Endothelial cell of umbilical vein (primary cell): ENCODE measurements at regions of chr2 and their contacts with region 1.

Region 1: DNA sequence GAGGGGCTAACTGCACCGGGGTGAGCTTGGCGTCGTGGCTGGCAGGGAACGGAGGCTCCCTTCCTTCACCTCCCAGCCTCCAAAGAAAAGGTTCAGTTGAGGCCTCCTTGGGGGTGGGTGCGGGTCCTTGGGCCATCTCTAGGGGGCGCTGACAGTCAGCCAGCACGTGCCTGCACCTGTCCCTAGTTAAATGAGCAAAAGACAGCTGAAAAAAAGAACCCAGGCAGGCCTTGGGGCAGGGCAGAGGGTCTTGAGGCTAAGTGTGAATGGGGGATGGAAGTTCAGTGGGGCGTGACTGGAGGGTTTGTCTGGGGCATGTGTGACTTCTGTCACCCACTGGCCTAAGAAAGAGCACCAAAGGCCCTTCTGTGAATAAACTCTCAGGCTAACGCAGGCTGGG is 56.4 kb downstream of the ZFP36L2 start:
- DNase-seq: peak; percentile 59
- H3K4me3 ChIP-seq: no peak overlapping the region
- H3K27ac ChIP-seq: peak overlapping the region; percentile 88
- H3K4me1 ChIP-seq: peaks cover 47% of the 10 kb centered on the region
- H3K27me3 ChIP-seq: no peaks in the 10 kb centered on the region
- CTCF ChIP-seq: peak; percentile 76 to 78
- POLR2A ChIP-seq: no peak

Region 2: GRCh38 chr2:42859006-42859552 is 310.9 kb before region 1 on chr2:
- CTCF ChIA-PET with region 1: no interaction called
- POLR2A ChIA-PET with region 1: no interaction called
- dilution Hi-C with region 1: no loop called
- intact Hi-C with region 1: loop called (anchors 1 kb)
- DNase-seq: peak; percentile 90
- H3K4me3 ChIP-seq: no peak overlapping the region
- H3K27ac ChIP-seq: no peak overlapping the region
- H3K4me1 ChIP-seq: peaks cover 19% of the 10 kb centered on the region
- H3K27me3 ChIP-seq: no peaks in the 10 kb centered on the region
- CTCF ChIP-seq: peak; percentile 75 to 78
- POLR2A ChIP-seq: no peak

Region 3: GRCh38 chr2:43041661-43042360 is 128.2 kb before region 1 on chr2:
- CTCF ChIA-PET with region 1: no interaction called
- POLR2A ChIA-PET with region 1: no interaction called
- dilution Hi-C with region 1: no loop called
- intact Hi-C with region 1: loop called (anchors 2 kb)
- DNase-seq: peak; percentile 98
- H3K4me3 ChIP-seq: no peak overlapping the region
- H3K27ac ChIP-seq: peak overlapping the region; percentile 45
- H3K4me1 ChIP-seq: peaks cover 42% of the 10 kb centered on the region
- H3K27me3 ChIP-seq: no peaks in the 10 kb centered on the region
- CTCF ChIP-seq: no peak
- POLR2A ChIP-seq: no peak

Region 4: GRCh38 chr2:43114210-43114609 is 55.8 kb before region 1 on chr2:
- CTCF ChIA-PET with region 1: interaction called, 5 read pairs
- POLR2A ChIA-PET with region 1: no interaction called
- dilution Hi-C with region 1: no loop called
- intact Hi-C with region 1: loop called (anchors 1 kb)
- DNase-seq: peak; percentile 96
- H3K4me3 ChIP-seq: no peak overlapping the region
- H3K27ac ChIP-seq: peak overlapping the region; percentile 49
- H3K4me1 ChIP-seq: peaks cover 25% of the 10 kb centered on the region
- H3K27me3 ChIP-seq: no peaks in the 10 kb centered on the region
- CTCF ChIP-seq: no peak
- POLR2A ChIP-seq: peak; percentile 47

Region 5: DNA sequence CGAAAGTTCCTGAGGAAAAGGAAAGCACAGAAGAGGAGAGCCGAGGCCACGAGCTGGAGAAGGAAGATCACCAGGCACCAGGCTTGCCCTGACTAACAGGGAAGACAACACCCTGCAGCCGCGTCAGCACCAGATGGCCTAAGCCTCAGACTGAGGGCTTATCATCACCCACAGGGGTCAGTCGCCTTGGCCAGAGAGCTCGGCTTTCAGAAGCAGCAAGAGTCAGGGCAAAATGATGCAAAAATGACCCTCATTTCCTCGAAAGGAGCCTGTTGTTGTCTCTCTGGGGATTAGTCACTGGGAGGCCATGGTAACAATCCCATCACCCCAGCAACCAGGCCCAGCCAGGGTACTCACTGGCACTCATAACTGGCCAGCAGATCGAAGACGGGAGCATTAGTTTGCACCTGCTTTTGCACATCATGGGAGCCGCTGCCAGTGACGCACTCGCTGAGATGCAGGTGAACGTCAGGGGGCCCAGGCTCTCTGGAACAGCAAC is 99.1 kb after region 1 on chr2:
- CTCF ChIA-PET with region 1: no interaction called
- POLR2A ChIA-PET with region 1: no interaction called
- dilution Hi-C with region 1: no loop called
- intact Hi-C with region 1: loop called (anchors 1 kb)
- DNase-seq: peak; percentile 98
- H3K4me3 ChIP-seq: no peak overlapping the region
- H3K27ac ChIP-seq: peak overlapping the region; percentile 84
- H3K4me1 ChIP-seq: peaks cover 16% of the 10 kb centered on the region
- H3K27me3 ChIP-seq: no peaks in the 10 kb centered on the region
- CTCF ChIP-seq: peak; percentile 5 to 35
- POLR2A ChIP-seq: peak; percentile 42

Region 6: GRCh38 chr2:44335806-44336538 is 1166.0 kb after region 1 on chr2:
- CTCF ChIA-PET with region 1: no interaction called
- POLR2A ChIA-PET with region 1: no interaction called
- dilution Hi-C with region 1: no loop called
- intact Hi-C with region 1: no loop called
- DNase-seq: no peak
- H3K4me3 ChIP-seq: no peak overlapping the region
- H3K27ac ChIP-seq: no peak overlapping the region
- H3K4me1 ChIP-seq: no peaks in the 10 kb centered on the region
- H3K27me3 ChIP-seq: no peaks in the 10 kb centered on the region
- CTCF ChIP-seq: no peak
- POLR2A ChIP-seq: no peak